ENCODE measurements at regions of chr10 and their contacts with region 1.

Region 1: GRCh38 chr10:24503461-24504320 is 220.0 kb downstream of the ARHGAP21 start:
- DNase-seq: peak; percentile 23
- H3K4me3 Mint-ChIP-seq: no peak overlapping the region
- H3K27ac Mint-ChIP-seq: no peak overlapping the region
- H3K4me1 Mint-ChIP-seq: no peaks in the 10 kb centered on the region
- H3K27me3 Mint-ChIP-seq: peaks cover 4% of the 10 kb centered on the region

Region 2: GRCh38 chr10:24518981-24519597 is 15.4 kb after region 1 on chr10:
- CTCF ChIA-PET with region 1: interaction called, 10 read pairs
- POLR2A ChIA-PET with region 1: no interaction called
- DNase-seq: peak; percentile 52
- H3K4me3 Mint-ChIP-seq: no peak overlapping the region
- H3K27ac Mint-ChIP-seq: no peak overlapping the region
- H3K4me1 Mint-ChIP-seq: peaks cover 14% of the 10 kb centered on the region
- H3K27me3 Mint-ChIP-seq: no peaks in the 10 kb centered on the region